Calu3 (cell line): ENCODE measurements at regions of chr1 and their contacts with region 1.

Region 1: GRCh38 chr1:81549604-81550127 is 251.1 kb upstream of the ADGRL2 start:
- DNase-seq: peak; percentile 32
- H3K4me3 Mint-ChIP-seq: no peak overlapping the region
- H3K27ac Mint-ChIP-seq: peak overlapping the region; percentile 4
- H3K4me1 Mint-ChIP-seq: peaks cover 38% of the 10 kb centered on the region
- H3K27me3 Mint-ChIP-seq: no peaks in the 10 kb centered on the region
- CTCF ChIP-seq: peak; percentile 51

Region 2: GRCh38 chr1:81305997-81306452 is 243.6 kb before region 1 on chr1:
- CTCF ChIA-PET with region 1: no interaction called
- intact Hi-C with region 1: loop called (anchors 10 kb)
- DNase-seq: peak; percentile 11
- H3K4me3 Mint-ChIP-seq: no peak overlapping the region
- H3K27ac Mint-ChIP-seq: no peak overlapping the region
- H3K4me1 Mint-ChIP-seq: no peaks in the 10 kb centered on the region
- H3K27me3 Mint-ChIP-seq: no peaks in the 10 kb centered on the region
- CTCF ChIP-seq: no peak

Region 3: GRCh38 chr1:81414488-81415015 is 135.1 kb before region 1 on chr1:
- CTCF ChIA-PET with region 1: no interaction called
- intact Hi-C with region 1: loop called (anchors 2 kb)
- DNase-seq: peak; percentile 82
- H3K4me3 Mint-ChIP-seq: no peak overlapping the region
- H3K27ac Mint-ChIP-seq: no peak overlapping the region
- H3K4me1 Mint-ChIP-seq: peaks cover 11% of the 10 kb centered on the region
- H3K27me3 Mint-ChIP-seq: no peaks in the 10 kb centered on the region
- CTCF ChIP-seq: peak; percentile 89

Region 4: DNA sequence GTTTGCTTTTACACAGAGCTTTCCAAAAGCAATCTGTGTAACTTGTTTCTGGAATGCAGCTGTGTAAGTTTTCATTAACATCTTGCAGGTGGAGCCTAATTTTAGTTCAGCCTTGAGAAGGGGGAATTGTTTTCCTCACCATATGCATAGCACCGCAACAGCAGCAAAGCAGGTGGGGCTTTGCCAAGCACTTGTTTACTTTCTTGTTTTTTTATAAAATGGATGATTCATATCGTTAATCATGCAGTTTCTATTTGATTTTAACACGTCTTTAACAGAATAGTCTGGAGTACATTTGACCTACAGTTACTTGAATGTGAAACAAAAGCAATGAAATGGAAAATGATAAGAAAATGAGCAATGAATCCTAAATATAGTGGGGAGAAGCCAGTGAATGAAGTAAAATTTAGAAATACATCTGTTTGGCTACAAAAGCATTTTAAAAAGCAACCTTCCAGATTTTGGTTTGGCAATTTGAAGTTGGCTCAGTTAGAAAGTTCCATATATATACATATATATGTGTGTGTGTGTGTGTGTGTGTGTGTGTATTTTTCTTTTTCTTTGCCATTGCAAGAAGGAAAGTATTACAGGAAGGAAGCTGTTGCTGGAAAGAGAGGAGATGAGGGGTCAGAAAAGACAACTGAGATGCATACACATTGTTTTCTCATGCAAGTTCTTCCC is 132.1 kb after region 1 on chr1:
- CTCF ChIA-PET with region 1: no interaction called
- intact Hi-C with region 1: loop called (anchors 1 kb)
- DNase-seq: peak; percentile 43
- H3K4me3 Mint-ChIP-seq: peak overlapping the region; percentile 42
- H3K27ac Mint-ChIP-seq: peak overlapping the region; percentile 95
- H3K4me1 Mint-ChIP-seq: peaks cover 42% of the 10 kb centered on the region
- H3K27me3 Mint-ChIP-seq: no peaks in the 10 kb centered on the region
- CTCF ChIP-seq: no peak

Region 5: GRCh38 chr1:81725823-81726222 is 176.2 kb after region 1 on chr1:
- CTCF ChIA-PET with region 1: no interaction called
- intact Hi-C with region 1: no loop called
- DNase-seq: no peak
- H3K4me3 Mint-ChIP-seq: no peak overlapping the region
- H3K27ac Mint-ChIP-seq: no peak overlapping the region
- H3K4me1 Mint-ChIP-seq: peaks cover 26% of the 10 kb centered on the region
- H3K27me3 Mint-ChIP-seq: no peaks in the 10 kb centered on the region
- CTCF ChIP-seq: no peak

Region 6: GRCh38 chr1:81760477-81761097 is 210.9 kb after region 1 on chr1:
- CTCF ChIA-PET with region 1: interaction called, 18 read pairs
- intact Hi-C with region 1: loop called (anchors 1 kb)
- DNase-seq: no peak
- H3K4me3 Mint-ChIP-seq: no peak overlapping the region
- H3K27ac Mint-ChIP-seq: no peak overlapping the region
- H3K4me1 Mint-ChIP-seq: peaks cover 9% of the 10 kb centered on the region
- H3K27me3 Mint-ChIP-seq: no peaks in the 10 kb centered on the region
- CTCF ChIP-seq: no peak

Region 7: DNA sequence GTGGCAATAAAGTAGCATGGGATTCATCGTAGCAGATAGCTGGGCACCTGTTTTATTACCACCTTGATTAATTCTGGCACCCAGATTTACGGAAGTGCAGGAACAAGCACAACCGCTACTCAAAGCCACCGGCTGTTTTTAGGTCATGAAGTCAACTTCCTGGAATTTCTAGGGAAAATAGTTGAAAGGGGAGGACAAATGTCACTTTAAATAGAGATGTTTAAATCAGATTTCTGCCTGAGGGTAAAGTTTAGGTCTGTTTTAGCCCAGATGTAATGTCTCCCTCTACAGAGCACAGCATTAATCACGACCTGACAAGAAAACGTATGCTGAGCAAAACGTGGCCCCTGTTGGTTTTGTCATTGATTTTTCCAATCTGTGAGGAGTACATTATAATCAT is 259.1 kb after region 1 on chr1:
- CTCF ChIA-PET with region 1: no interaction called
- intact Hi-C with region 1: loop called (anchors 2 kb)
- DNase-seq: peak; percentile 11
- H3K4me3 Mint-ChIP-seq: peak overlapping the region; percentile 57
- H3K27ac Mint-ChIP-seq: peak overlapping the region; percentile 75
- H3K4me1 Mint-ChIP-seq: peaks cover 33% of the 10 kb centered on the region
- H3K27me3 Mint-ChIP-seq: no peaks in the 10 kb centered on the region
- CTCF ChIP-seq: no peak

Region 8: GRCh38 chr1:81978945-81979344 is 429.3 kb after region 1 on chr1:
- CTCF ChIA-PET with region 1: no interaction called
- intact Hi-C with region 1: loop called (anchors 10 kb)
- DNase-seq: no peak
- H3K4me3 Mint-ChIP-seq: no peak overlapping the region
- H3K27ac Mint-ChIP-seq: peak overlapping the region; percentile 12
- H3K4me1 Mint-ChIP-seq: no peaks in the 10 kb centered on the region
- H3K27me3 Mint-ChIP-seq: no peaks in the 10 kb centered on the region
- CTCF ChIP-seq: no peak